ENCODE measurements at regions of chr13 and their contacts with region 1.

Region 1: GRCh38 chr13:23375001-23375971 is 58.2 kb downstream of the SACS start:
- DNase-seq: peak; percentile 97 to 99
- ATAC-seq: peak; percentile 97
- H3K4me3 ChIP-seq: peak overlapping the region; percentile 52 to 72
- H3K27ac ChIP-seq: peak overlapping the region; percentile 33 to 88
- H3K4me1 ChIP-seq: peaks cover 0 to 3% of the 10 kb centered on the region in 2 donors
- H3K27me3 ChIP-seq: no peaks in the 10 kb centered on the region

Region 2: GRCh38 chr13:23321535-23322241 is 53.6 kb before region 1 on chr13:
- intact Hi-C with region 1: loop called in 1 of 2 experiments (anchors 5 kb)
- DNase-seq: peak; percentile 82 to 92
- ATAC-seq: peak; percentile 79
- H3K4me3 ChIP-seq: peak overlapping the region in 1 of 2 donors; percentile 53
- H3K27ac ChIP-seq: peak overlapping the region; percentile 23 to 85
- H3K4me1 ChIP-seq: peaks cover 0 to 7% of the 10 kb centered on the region in 2 donors
- H3K27me3 ChIP-seq: no peaks in the 10 kb centered on the region

Region 3: GRCh38 chr13:23411706-23412105 is 36.4 kb after region 1 on chr13:
- intact Hi-C with region 1: loop called in 1 of 2 experiments (anchors 5 kb)
- DNase-seq: no peak
- ATAC-seq: no peak
- H3K4me3 ChIP-seq: no peak overlapping the region
- H3K27ac ChIP-seq: no peak overlapping the region
- H3K4me1 ChIP-seq: no peaks in the 10 kb centered on the region
- H3K27me3 ChIP-seq: no peaks in the 10 kb centered on the region

Region 4: GRCh38 chr13:23427342-23427843 is 52.1 kb after region 1 on chr13:
- intact Hi-C with region 1: loop called (anchors 1 to 5 kb)
- DNase-seq: peak in 1 of 2 donors; percentile 64
- ATAC-seq: peak; percentile 89
- H3K4me3 ChIP-seq: no peak overlapping the region
- H3K27ac ChIP-seq: peak overlapping the region; percentile 69 to 84
- H3K4me1 ChIP-seq: no peaks in the 10 kb centered on the region
- H3K27me3 ChIP-seq: no peaks in the 10 kb centered on the region

Region 5: DNA sequence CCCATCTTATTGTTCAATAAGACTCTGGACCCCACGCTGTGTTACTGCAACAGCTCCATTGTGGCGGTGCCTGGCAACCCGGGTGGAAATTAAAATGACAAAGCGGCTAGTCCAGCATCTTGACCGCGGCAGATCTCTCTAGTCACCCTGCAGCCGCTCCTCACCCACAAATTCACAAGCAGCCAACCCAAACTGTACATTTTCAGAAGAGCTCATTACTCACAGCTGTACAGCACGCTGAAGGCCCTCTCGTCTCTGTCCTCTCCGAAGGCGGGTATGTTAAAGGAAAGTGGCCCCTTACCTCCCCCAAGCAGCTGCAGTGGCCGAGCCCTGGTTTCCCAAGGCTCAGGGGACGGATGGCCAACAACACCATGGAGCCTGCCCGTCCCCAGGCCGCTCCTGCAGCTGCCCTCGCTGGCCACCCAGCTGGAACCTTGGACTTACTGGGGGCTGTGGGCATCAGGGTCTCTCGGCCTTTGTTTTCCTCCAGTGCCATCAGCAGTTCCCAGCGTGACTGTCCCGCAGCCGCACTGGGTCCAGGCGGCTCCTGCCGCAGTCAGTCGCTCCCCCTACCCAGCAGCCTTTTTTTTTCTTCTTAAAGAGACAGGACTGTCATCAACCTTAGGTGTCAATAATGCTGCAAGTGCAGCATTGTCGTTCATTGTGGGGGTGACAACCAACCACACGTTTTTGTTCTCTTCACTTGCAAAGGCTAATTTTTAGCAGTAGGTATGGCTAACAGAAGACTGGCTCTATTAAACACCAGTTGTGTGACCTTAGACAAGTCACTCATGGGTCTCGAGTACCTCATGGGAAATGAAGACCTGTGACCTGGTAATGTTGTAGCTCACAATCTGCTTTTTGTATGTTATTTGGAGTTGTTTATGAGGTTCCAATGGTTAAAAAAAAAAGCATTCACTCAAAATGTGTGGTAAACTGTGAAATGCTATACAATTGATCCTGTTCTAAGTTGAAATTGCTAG is 58.2 kb after region 1 on chr13 and contains the start of gene SACS:
- intact Hi-C with region 1: loop called (anchors 2 to 5 kb)
- DNase-seq: no peak
- ATAC-seq: peak; percentile 78
- H3K4me3 ChIP-seq: peak within 1 kb of the TSS; percentile 98
- H3K27ac ChIP-seq: peak within 1 kb of the TSS; percentile 29 to 81
- H3K4me1 ChIP-seq: no peaks in the 10 kb centered on the region
- H3K27me3 ChIP-seq: no peaks in the 10 kb centered on the region
- total RNA-seq, gene SACS: 35.8 to 79.0 TPM

Region 6: GRCh38 chr13:23460309-23460708 is 85.0 kb after region 1 on chr13:
- intact Hi-C with region 1: loop called in 1 of 2 experiments (anchors 2 kb)
- DNase-seq: no peak
- ATAC-seq: no peak
- H3K4me3 ChIP-seq: no peak overlapping the region
- H3K27ac ChIP-seq: no peak overlapping the region
- H3K4me1 ChIP-seq: peaks cover 4 to 5% of the 10 kb centered on the region in 2 donors
- H3K27me3 ChIP-seq: no peaks in the 10 kb centered on the region

Region 7: GRCh38 chr13:24270639-24271141 is 895.4 kb after region 1 on chr13:
- intact Hi-C with region 1: loop called in 1 of 2 experiments (anchors 5 kb)
- DNase-seq: peak; percentile 86 to 90
- ATAC-seq: peak; percentile 87
- H3K4me3 ChIP-seq: peak overlapping the region; percentile 46 to 83
- H3K27ac ChIP-seq: peak overlapping the region in 1 of 2 donors; percentile 90
- H3K4me1 ChIP-seq: no peaks in the 10 kb centered on the region
- H3K27me3 ChIP-seq: no peaks in the 10 kb centered on the region

Measured in aorta (tissue), 5 donors.